Astrocyte of the cerebellum (primary cell): ENCODE measurements at regions of chr4 and their contacts with region 1.

Region 1: DNA sequence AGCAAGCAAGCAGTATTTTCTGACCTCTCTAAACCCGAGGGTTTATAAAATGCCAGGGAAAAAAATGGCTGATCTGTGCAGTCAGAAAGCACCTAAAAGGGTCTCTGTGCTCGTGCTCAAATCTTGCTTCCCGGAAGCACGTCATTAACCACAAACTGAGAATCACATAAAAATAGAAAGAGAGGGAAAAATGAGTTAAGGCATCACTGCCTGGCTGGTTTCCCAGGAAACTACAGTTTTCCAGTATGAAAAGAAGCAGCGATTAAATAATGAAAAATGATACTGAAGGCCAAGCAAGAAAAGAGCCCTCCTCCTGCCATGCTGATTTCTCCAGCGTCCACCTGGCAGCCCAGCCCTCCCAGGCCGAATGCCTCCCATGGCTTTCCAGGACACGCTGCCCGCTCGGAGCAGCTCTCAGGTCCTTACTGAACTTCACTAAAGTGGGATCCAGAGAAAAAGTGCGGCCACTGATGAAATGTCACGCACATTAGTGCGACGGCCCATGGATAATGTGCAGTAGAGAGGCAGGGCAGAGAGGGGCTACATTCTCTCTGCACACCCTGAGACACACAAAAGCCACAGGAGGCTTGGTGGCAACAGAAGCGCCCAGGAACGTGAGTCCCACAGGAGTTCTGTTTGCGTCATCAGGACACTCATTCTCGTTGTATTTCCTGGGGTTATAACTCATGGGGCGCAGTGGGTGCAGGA is 80.4 kb downstream of the WFS1 start:
- DNase-seq: no peak
- H3K4me3 ChIP-seq: no peak overlapping the region
- CTCF ChIP-seq: no peak

Region 2: DNA sequence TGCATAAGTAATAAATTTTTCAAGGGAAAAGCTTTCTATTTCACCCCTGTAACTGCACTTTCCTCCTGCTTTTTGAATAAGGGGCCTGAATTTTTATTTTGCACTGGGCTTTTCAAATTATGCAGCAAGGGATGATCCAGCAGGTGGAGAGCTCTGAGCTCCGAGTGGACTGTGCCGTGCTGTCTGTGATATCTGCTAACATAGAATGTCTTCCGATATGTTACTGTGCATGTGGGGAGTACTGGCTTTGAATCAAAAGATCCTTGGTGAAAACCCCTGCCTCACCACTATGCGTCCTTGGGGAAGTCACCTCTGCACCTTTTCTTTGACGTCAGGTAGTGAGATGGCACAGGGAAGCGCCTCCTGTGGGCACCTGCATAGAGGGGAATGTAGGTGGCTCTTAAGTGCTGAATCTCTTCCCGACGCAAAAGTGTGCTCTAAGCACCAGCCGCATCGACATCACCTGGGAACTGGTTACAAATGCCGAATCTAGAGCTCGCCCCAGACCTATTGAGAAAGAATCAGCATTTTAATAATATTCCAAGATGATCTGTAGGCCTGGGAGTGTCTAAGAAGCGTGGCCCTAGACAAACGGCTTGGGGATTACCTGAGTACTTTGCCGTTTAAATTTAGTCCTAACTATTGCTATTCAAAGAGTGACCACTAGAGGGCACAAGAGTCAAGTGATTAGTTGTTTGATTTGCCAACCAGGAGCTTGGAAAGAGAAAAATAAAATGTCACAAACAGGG is 99.6 kb before region 1 on chr4:
- in situ Hi-C with region 1: loop called (anchors 5 kb)
- DNase-seq: peak; percentile 46
- H3K4me3 ChIP-seq: no peak overlapping the region
- CTCF ChIP-seq: peak; percentile 72

Region 3: DNA sequence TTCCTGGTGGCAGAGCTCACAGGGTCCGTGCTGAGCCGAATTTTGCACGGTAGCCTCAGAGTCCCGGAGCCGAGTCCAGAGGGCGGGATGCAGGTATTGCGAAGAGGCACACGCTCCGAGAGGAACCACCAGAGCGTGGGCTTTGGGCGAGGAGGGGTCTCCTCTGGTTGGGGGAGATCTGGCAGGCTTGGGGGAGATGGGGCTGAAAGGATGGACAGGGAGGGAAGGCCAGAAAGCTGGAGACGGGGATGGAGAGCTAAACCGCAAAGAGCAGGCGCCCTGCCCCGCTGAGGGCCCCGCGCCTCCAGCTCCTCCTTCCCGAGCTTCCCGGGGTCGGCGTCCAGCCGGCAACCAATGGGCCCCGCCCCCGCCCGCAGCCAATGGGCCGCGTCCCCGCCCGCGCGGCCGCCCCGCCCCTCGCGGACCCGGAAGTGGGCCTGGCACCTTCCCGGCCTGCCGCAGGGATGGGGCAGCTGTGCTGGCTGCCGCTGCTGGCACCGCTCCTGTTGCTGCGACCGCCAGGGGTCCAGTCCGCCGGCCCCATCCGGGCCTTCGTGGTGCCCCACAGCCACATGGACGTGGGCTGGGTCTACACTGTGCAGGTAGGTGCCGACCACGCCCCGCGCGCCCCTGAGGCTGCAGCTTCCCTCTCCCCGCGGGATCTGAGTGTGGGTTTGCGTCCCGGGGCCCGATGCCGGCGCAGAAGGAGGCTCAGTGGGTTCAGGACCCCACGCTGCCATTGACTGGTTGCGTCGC is 224.9 kb after region 1 on chr4 and contains the start of gene MAN2B2:
- in situ Hi-C with region 1: no loop called
- DNase-seq: no peak
- H3K4me3 ChIP-seq: peak within 1 kb of the TSS; percentile 75
- CTCF ChIP-seq: no peak

Region 4: GRCh38 chr4:7280926-7281690 is 931.1 kb after region 1 on chr4:
- in situ Hi-C with region 1: no loop called
- DNase-seq: no peak
- H3K4me3 ChIP-seq: no peak overlapping the region
- CTCF ChIP-seq: no peak